T-cell (primary cell): ENCODE measurements at regions of chr14 and their contacts with region 1.

Region 1: GRCh38 chr14:45267071-45267470 is 14.1 kb upstream of the MIS18BP1 start:
- DNase-seq: no peak
- ATAC-seq: no peak
- H3K4me3 ChIP-seq: no peak overlapping the region
- H3K4me3 Mint-ChIP-seq: no peak overlapping the region
- H3K27ac ChIP-seq: no peak overlapping the region
- H3K27ac Mint-ChIP-seq: no peak overlapping the region
- H3K4me1 ChIP-seq: no peaks in the 10 kb centered on the region
- H3K4me1 Mint-ChIP-seq: no peaks in the 10 kb centered on the region
- H3K27me3 ChIP-seq: no peaks in the 10 kb centered on the region
- H3K27me3 Mint-ChIP-seq: peaks cover 0 to 5% of the 10 kb centered on the region in 2 donors

Region 2: GRCh38 chr14:44914849-44915248 is 352.2 kb before region 1 on chr14:
- CTCF ChIA-PET with region 1: interaction called, 6 to 13 read pairs
- POLR2A ChIA-PET with region 1: no interaction called
- DNase-seq: no peak
- ATAC-seq: no peak
- H3K4me3 ChIP-seq: no peak overlapping the region
- H3K4me3 Mint-ChIP-seq: no peak overlapping the region
- H3K27ac ChIP-seq: no peak overlapping the region
- H3K27ac Mint-ChIP-seq: no peak overlapping the region
- H3K4me1 ChIP-seq: peaks cover 0 to 5% of the 10 kb centered on the region in 2 experiments
- H3K4me1 Mint-ChIP-seq: peaks cover 0 to 7% (median 2%) of the 10 kb centered on the region in 3 donors
- H3K27me3 ChIP-seq: peaks cover 2 to 27% of the 10 kb centered on the region in 2 experiments
- H3K27me3 Mint-ChIP-seq: peaks cover 26 to 35% of the 10 kb centered on the region in 2 donors

Region 3: DNA sequence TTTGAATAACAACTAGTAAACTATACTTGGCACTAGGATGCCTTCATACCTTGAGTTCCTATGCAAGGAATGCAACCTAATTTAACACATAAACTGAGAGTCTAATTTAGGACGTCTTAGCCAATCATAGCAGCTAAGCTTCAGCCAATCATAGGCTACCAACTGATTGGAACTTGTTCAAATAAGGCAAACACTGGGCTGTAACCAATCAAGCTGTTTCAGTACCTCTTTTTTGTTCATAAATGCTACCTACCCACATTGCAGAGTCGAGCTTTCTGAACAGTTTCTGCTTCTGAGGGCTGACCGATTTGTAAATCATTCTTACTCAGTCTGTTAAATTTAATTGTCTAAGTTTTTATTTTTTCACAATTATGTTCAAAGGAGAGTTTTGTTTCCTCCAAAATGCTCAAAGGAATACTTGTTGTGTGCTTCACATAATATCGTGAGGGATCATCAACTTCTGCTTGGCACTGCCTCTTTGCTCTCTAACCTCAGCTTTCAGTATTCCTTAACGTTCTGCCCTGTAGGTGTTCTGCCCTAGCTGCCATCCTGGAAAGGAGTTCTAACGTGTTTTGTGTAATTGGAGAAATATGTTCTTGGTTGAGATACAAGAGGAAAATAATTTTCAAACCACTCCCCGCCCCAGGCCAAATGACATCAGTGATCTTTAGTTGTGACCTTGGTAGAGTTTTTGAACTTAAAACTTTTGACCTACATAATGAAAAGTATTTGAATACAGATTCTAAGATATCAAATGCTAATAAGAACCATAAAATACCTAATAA is 366.3 kb after region 1 on chr14:
- CTCF ChIA-PET with region 1: no interaction called
- POLR2A ChIA-PET with region 1: no interaction called
- DNase-seq: no peak
- ATAC-seq: no peak
- H3K4me3 ChIP-seq: no peak overlapping the region
- H3K4me3 Mint-ChIP-seq: no peak overlapping the region
- H3K27ac ChIP-seq: no peak overlapping the region
- H3K27ac Mint-ChIP-seq: no peak overlapping the region
- H3K4me1 ChIP-seq: no peaks in the 10 kb centered on the region
- H3K4me1 Mint-ChIP-seq: no peaks in the 10 kb centered on the region
- H3K27me3 ChIP-seq: no peaks in the 10 kb centered on the region
- H3K27me3 Mint-ChIP-seq: no peaks in the 10 kb centered on the region